ENCODE measurements at regions of chr18 and their contacts with region 1.

Region 1: DNA sequence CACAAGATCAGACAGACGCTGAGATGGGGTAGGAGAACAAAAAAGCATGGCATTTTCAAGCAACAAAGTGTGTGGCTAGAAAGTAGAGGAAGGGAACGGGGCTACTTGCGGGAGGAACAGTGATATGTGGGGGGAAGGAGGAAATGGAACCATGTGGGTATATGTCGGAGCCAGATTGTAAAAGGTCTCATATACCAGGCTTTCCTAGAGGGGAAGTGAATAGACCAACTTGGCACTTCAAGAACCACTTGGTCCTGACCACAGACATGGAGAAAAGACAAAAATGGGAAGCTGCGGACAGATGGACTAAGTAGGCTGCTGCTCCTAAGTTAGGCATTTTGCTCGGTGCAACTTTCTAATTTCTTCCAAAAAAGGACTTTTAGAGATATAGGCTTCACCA is 196.0 kb downstream of the DCC start:
- DNase-seq: no peak
- H3K4me3 ChIP-seq: no peak overlapping the region
- H3K27ac ChIP-seq: no peak overlapping the region
- H3K4me1 ChIP-seq: no peaks in the 10 kb centered on the region
- H3K27me3 ChIP-seq: no peaks in the 10 kb centered on the region
- CTCF ChIP-seq: no peak

Region 2: GRCh38 chr18:52484977-52485376 is 51.1 kb before region 1 on chr18:
- dilution Hi-C with region 1: loop called (anchors 5 kb)
- DNase-seq: no peak
- H3K4me3 ChIP-seq: no peak overlapping the region
- H3K27ac ChIP-seq: no peak overlapping the region
- H3K4me1 ChIP-seq: no peaks in the 10 kb centered on the region
- H3K27me3 ChIP-seq: no peaks in the 10 kb centered on the region
- CTCF ChIP-seq: no peak

Measured in keratinocyte (primary cell).